ENCODE measurements at regions of chr7 and their contacts with region 1.

Region 1: GRCh38 chr7:130365511-130366441 is 14.5 kb upstream of the CPA1 start:
- DNase-seq: peak; percentile 90 to 94 (median 92)
- H3K4me3 ChIP-seq: no peak overlapping the region
- H3K27ac ChIP-seq: peak overlapping the region; percentile 58 to 65
- H3K4me1 ChIP-seq: peaks cover 17% of the 10 kb centered on the region
- H3K27me3 ChIP-seq: no peaks in the 10 kb centered on the region
- CTCF ChIP-seq: no peak
- EP300 ChIP-seq: no peak
- POLR2A ChIP-seq: no peak

Region 2: DNA sequence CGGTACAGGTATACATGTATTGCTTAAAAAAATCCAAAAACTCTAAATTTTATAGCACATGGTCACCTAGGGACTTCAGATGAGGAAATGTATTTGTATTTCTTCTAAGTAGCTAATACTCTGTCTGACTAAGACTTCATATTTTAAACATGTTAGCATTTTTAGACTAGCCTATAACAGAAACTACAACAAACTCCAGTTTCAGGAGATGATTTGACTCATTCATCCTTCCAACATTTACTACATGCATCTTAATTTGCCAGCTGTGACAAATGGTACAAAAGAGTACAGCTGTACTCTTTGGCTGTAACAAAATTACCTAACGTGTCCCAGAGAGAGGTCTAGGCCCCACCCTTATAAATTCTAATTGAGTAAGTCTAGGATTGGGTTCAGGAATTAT is 182.8 kb before region 1 on chr7:
- intact Hi-C with region 1: no loop called
- DNase-seq: no peak
- H3K4me3 ChIP-seq: no peak overlapping the region
- H3K27ac ChIP-seq: no peak overlapping the region
- H3K4me1 ChIP-seq: no peaks in the 10 kb centered on the region
- H3K27me3 ChIP-seq: no peaks in the 10 kb centered on the region
- CTCF ChIP-seq: no peak
- EP300 ChIP-seq: no peak
- POLR2A ChIP-seq: no peak

Region 3: GRCh38 chr7:130400120-130400591 is 34.4 kb after region 1 on chr7:
- intact Hi-C with region 1: loop called in 1 of 4 experiments (anchors 2 kb)
- DNase-seq: no peak
- H3K4me3 ChIP-seq: no peak overlapping the region
- H3K27ac ChIP-seq: no peak overlapping the region
- H3K4me1 ChIP-seq: peaks cover 13% of the 10 kb centered on the region
- H3K27me3 ChIP-seq: no peaks in the 10 kb centered on the region
- CTCF ChIP-seq: no peak
- EP300 ChIP-seq: no peak
- POLR2A ChIP-seq: no peak

Measured in ovary (tissue), 10 donors.